GM18951 (cell line): ENCODE measurements at regions of chr1 and their contacts with region 1.

Region 1: DNA sequence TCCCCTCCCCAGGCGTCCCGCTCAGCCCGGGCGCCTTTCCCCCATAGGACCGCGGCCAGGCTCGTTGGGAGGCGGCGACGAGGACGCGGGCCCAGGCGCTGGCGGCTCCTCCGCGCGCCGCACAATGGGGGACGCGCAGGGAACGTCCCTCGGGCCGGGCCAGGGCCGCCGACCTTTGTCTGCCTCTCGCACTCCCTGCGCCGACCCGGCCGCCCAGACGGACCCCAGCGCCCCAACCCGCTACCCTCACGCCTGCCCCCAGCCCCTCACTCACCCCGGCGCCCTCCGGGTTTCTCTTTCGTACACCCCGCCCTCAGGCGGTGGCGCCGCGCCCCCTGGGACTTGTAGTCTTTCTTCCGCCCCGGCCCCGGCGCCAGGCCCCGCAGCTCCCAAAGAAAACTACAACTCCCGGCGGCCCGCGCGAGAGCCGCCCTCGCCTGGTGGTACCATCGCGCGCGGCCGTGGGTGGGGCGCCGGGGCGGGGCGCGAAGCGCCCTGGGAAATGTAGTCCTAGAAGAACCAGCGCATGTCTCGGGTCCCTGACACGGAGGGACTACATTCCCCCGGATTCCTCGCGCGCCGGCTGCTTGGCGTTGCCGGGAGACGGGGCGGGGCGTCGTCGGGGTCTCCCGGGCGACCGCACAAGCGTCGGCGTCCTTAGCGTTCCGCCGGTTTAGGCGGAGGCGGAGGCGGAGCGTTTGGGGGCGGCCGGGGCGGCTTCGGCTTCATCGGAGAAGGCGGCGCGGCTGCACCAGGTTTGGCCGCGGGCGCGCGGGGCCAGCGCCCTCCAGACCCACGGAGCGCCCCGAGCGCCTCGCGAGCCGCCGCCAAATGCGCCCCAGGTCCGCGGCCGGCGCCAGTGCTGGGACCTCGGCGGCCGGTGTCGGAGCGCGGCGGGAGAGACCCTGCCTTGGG is at the start of gene C1orf159:
- POLR2A ChIP-seq: peak; percentile 48

Region 2: DNA sequence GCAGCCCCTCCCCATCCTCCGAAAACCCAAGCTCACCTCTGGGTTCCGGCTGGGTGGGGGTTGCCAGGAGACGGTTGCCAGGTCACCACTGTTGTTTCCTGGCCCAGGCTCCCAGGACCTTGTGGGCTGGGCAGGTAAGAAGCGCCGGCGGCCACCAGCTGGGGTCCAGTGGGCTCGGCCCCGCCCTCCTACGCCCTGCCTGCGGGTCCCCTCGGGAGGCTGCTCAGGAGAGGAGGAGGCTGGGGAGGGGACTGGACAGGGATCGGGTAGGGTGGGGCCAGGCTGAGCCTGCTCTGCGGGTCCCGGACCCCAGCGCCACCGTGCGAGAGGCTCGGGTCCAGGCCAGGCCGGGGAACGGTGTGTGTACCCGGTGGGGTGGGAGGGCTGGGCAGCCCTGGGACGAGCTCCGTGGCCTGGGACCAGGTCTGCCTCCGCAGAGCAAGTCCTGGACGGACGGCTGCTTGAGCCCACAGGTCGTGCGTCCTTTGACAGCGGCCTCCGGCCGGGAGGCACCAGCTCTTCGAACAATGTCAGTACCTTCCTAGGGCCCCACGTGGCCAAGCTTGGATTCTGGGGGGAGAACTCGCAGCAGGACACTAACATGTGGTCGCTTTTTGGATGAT is 57.9 kb after region 1 on chr1 and contains the start of gene TTLL10:
- in situ Hi-C with region 1: no loop called
- POLR2A ChIP-seq: no peak

Region 3: DNA sequence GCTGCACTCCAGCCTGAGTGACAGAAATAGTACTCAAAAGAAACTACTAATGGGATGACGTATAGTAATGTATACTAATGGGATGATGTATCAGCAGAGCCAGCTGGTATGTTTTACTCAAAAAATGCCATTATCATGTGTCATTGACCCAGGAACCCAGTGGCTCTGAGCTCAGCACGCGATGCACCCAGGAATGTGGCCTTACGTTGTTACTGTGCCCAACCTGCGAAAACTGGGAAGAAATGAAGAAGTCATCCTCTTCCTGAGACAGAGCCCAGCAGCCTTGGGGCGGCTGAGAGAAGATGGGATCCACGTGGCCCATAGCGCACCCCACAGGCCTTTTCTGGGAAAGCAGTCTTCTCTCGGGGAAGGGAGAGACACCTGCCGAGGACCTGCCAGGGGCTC is 148.8 kb after region 1 on chr1:
- in situ Hi-C with region 1: loop called (anchors 10 kb)
- POLR2A ChIP-seq: no peak